Activated CD4-positive, alpha-beta T cell treated with anti-CD3 and anti-CD28 coated beads for 36 hours (primary cell): ENCODE measurements at regions of chr6 and their contacts with region 1.

Region 1: GRCh38 chr6:57089687-57090460 is at the start of gene ZNF451:
- DNase-seq: peak; percentile 98
- ATAC-seq: peak; percentile 95
- H3K4me3 Mint-ChIP-seq: peak within 1 kb of the TSS; percentile 73
- H3K27ac Mint-ChIP-seq: peak within 1 kb of the TSS; percentile 82
- H3K4me1 Mint-ChIP-seq: peaks cover 32% of the 10 kb centered on the region
- H3K27me3 Mint-ChIP-seq: no peaks in the 10 kb centered on the region
- total RNA-seq, gene ZNF451: 46.8 to 60.3 TPM

Region 2: GRCh38 chr6:55836481-55836880 is 1253.4 kb before region 1 on chr6:
- CTCF ChIA-PET with region 1: no interaction called
- POLR2A ChIA-PET with region 1: no interaction called
- intact Hi-C with region 1: no loop called
- DNase-seq: no peak
- ATAC-seq: no peak
- H3K4me3 Mint-ChIP-seq: no peak overlapping the region
- H3K27ac Mint-ChIP-seq: no peak overlapping the region
- H3K4me1 Mint-ChIP-seq: no peaks in the 10 kb centered on the region
- H3K27me3 Mint-ChIP-seq: no peaks in the 10 kb centered on the region

Region 3: GRCh38 chr6:56618050-56618449 is 471.8 kb before region 1 on chr6:
- CTCF ChIA-PET with region 1: no interaction called
- POLR2A ChIA-PET with region 1: no interaction called
- intact Hi-C with region 1: no loop called
- DNase-seq: peak; percentile 9
- ATAC-seq: no peak
- H3K4me3 Mint-ChIP-seq: no peak overlapping the region
- H3K27ac Mint-ChIP-seq: no peak overlapping the region
- H3K4me1 Mint-ChIP-seq: no peaks in the 10 kb centered on the region
- H3K27me3 Mint-ChIP-seq: peaks cover 5% of the 10 kb centered on the region

Region 4: GRCh38 chr6:57172136-57173055 is 82.5 kb after region 1 on chr6 and contains the start of gene BAG2:
- CTCF ChIA-PET with region 1: no interaction called
- POLR2A ChIA-PET with region 1: interaction called, 5 read pairs
- intact Hi-C with region 1: loop called (anchors 1 kb)
- DNase-seq: peak; percentile 94
- ATAC-seq: peak; percentile 89
- H3K4me3 Mint-ChIP-seq: peak within 1 kb of the TSS; percentile 87
- H3K27ac Mint-ChIP-seq: peak within 1 kb of the TSS; percentile 96
- H3K4me1 Mint-ChIP-seq: peaks cover 35% of the 10 kb centered on the region
- H3K27me3 Mint-ChIP-seq: no peaks in the 10 kb centered on the region
- total RNA-seq, gene BAG2: 8.2 to 8.8 TPM